ENCODE measurements at regions of chr19 and their contacts with region 1.

Region 1: GRCh38 chr19:14354445-14354844 is 26.8 kb upstream of the ADGRE5 start:
- DNase-seq: no peak
- ATAC-seq: no peak
- H3K4me3 Mint-ChIP-seq: no peak overlapping the region
- H3K27ac Mint-ChIP-seq: no peak overlapping the region
- H3K4me1 Mint-ChIP-seq: peaks cover 37% of the 10 kb centered on the region
- H3K27me3 Mint-ChIP-seq: no peaks in the 10 kb centered on the region

Region 2: GRCh38 chr19:14366498-14366915 is 12.1 kb after region 1 on chr19:
- CTCF ChIA-PET with region 1: interaction called, 23 read pairs
- POLR2A ChIA-PET with region 1: interaction called, 13 read pairs
- DNase-seq: peak; percentile 92
- ATAC-seq: peak; percentile 38
- H3K4me3 Mint-ChIP-seq: peak overlapping the region; percentile 45
- H3K27ac Mint-ChIP-seq: peak overlapping the region; percentile 86
- H3K4me1 Mint-ChIP-seq: peaks cover 76% of the 10 kb centered on the region
- H3K27me3 Mint-ChIP-seq: no peaks in the 10 kb centered on the region